Keratinocyte (primary cell): ENCODE measurements at regions of chr1 and their contacts with region 1.

Region 1: DNA sequence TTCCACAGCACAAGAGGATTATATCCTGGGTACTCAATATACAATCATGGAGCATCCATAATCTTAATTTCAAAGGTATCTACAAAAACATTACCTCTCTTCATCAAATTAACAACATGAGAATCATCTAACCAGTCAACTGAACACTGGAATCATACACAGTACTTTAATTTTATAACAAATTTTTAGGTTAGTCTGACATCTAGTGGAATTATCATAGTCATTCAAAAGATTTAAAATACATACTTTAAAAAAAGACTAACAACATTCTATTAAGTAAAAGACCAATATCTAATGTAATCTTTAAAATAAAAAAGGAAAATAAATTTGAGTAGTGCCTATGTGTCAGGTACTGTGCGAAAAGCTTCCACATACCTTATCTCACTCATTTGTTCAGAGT is 16.8 kb upstream of the SH3GLB1 start:
- DNase-seq: no peak
- H3K4me3 ChIP-seq: no peak overlapping the region
- H3K27ac ChIP-seq: no peak overlapping the region
- H3K4me1 ChIP-seq: no peaks in the 10 kb centered on the region
- H3K27me3 ChIP-seq: no peaks in the 10 kb centered on the region
- CTCF ChIP-seq: no peak

Region 2: GRCh38 chr1:86499987-86500593 is 187.5 kb before region 1 on chr1:
- dilution Hi-C with region 1: loop called (anchors 25 kb)
- DNase-seq: no peak
- H3K4me3 ChIP-seq: no peak overlapping the region
- H3K27ac ChIP-seq: no peak overlapping the region
- H3K4me1 ChIP-seq: peaks cover 26% of the 10 kb centered on the region
- H3K27me3 ChIP-seq: no peaks in the 10 kb centered on the region
- CTCF ChIP-seq: peak in 2 of 3 experiments; percentile 55 to 56

Region 3: GRCh38 chr1:86887479-86888162 is 200.0 kb after region 1 on chr1:
- dilution Hi-C with region 1: no loop called
- DNase-seq: no peak
- H3K4me3 ChIP-seq: no peak overlapping the region
- H3K27ac ChIP-seq: no peak overlapping the region
- H3K4me1 ChIP-seq: no peaks in the 10 kb centered on the region
- H3K27me3 ChIP-seq: no peaks in the 10 kb centered on the region
- CTCF ChIP-seq: no peak